Activated naive CD4-positive, alpha-beta T cell treated with anti-CD3 and anti-CD28 coated beads for 36 hours (primary cell): ENCODE measurements at regions of chr11 and their contacts with region 1.

Region 1: DNA sequence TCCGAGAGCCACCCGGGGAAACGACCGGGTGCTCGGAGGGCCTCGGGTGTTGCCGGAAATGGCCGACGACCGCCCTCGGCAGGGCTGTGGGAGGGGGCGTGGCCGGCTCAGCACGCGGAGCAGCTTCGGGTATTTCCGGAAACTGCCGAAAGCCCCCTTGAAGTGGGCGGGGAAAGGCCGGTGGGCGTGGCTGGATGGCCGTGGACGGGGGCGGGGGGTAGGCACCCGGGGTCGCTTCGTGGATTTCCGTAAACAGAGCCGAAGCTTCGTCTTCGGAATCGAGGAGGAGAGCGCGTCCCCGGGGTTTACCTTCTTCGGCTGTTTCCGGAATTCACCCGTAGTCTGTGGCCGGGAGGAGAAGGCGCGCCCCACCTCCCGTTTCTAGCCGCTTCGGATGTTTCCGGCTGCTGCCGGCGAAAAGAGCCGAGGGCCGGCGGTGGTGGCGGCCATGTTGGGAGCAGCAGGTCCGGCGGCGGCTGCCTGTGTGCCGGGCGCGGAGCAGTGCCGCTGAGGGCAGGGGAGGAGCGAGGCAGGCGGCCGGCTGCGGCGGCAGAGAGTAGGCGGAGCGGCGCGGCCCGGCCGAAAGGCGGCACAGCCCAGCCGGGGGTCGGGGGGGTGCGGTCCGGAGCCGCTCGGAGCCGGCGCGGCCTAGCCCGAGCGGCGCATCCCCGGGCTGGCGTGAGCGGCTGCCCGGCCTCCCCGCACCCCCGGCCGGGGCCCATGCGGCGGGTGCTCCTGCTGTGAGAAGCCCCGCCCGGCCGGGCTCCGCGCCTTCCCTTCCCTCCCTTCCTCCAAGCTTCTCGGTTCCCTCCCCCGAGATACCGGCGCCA is at the start of gene MARK2:
- DNase-seq: peak; percentile 100
- H3K4me3 Mint-ChIP-seq: peak within 1 kb of the TSS; percentile 97
- H3K27ac Mint-ChIP-seq: peak within 1 kb of the TSS; percentile 65
- H3K4me1 Mint-ChIP-seq: peaks cover 48% of the 10 kb centered on the region
- H3K27me3 Mint-ChIP-seq: no peaks in the 10 kb centered on the region
- total RNA-seq, gene MARK2: 15.8 to 17.6 TPM

Region 2: DNA sequence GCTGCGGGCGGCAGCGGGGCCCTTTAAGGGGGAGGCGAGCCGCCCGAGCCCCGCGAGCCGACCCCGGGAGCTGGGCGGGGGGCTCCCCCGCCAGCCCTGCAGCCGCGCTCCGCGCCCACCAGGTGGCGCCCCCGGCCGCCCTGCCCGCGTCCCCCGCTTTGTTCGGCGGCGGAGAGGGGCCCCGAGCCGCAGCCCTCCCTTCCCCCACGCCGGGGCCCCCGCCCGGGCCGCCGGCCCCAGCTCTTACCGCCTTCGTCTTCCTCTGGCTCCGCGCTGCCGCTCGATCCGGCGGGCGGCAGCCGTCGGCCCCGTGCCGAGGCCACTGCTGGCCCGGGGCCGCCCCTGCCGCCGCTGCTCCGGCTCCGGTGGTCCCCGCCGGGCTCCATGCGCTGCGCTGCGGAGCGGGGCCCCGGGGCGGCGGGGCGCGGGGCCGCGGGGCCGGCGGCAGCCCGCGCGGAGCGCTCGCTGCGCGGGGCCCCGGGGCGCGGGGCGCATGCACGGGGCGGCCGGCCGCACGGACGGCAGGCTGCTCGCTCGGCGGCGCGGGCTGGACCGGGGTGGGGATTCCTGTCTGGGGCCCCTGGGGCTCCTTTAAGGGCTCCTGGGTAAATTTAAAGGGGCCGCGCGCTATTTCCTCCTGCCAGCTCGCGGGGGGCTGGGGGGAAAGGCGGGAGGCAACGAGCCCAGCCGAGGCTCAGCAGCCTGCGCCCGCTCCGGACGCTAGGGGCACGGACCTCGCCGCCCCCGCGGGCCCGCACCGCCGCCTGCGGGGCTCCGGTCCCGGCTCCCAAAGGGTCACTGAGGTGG is 70.5 kb before region 1 on chr11 and contains the start of gene ZFTA:
- CTCF ChIA-PET with region 1: interaction called, 7 read pairs
- intact Hi-C with region 1: loop called (anchors 2 kb)
- DNase-seq: peak; percentile 49
- H3K4me3 Mint-ChIP-seq: peak within 1 kb of the TSS; percentile 88
- H3K27ac Mint-ChIP-seq: no peak within 1 kb of the TSS
- H3K4me1 Mint-ChIP-seq: peaks cover 11% of the 10 kb centered on the region
- H3K27me3 Mint-ChIP-seq: peaks cover 12% of the 10 kb centered on the region
- total RNA-seq, gene ZFTA: 0.91 TPM

Region 3: DNA sequence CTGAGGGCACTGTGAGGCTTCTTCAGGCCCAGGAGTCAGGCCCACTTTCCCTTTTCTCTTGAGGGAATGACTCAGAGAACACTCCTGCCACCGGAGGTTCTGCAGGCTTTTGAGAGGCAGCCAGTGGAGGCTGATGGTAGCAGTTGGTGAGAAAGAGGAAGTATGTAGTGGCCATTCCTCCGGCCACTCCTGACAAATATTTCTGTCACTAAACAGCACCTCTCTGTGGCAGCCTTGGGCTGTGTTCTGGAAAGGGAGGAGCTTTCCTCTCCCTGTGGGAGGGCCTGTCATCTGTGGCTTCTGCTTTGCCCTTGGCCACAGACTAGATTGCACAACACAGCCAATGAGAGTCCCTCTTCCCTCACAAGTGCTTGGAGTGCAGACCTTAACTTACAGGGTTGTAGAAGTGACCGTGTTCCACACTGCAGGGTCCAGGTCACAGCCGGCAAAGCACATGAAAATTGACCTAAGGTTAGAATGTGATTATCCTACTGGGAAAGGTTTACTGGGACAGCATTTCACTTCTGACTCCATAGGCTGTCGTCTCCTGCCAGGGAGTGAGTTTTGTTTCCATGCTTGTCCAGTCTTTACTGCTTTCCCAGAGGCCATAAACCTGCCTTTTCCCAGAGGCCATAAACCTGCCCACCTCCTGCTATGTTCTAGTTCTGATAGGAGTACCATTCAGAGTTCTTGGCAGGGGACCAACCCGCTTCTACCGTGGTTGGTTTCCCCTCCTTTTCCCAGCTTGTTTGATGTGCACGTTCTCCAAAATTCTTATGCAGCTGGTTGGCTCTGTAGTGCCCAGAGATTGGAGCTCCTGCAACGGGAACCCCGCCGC is 33.3 kb after region 1 on chr11:
- CTCF ChIA-PET with region 1: interaction called, 15 read pairs
- intact Hi-C with region 1: no loop called
- DNase-seq: peak; percentile 61
- H3K4me3 Mint-ChIP-seq: no peak overlapping the region
- H3K27ac Mint-ChIP-seq: no peak overlapping the region
- H3K4me1 Mint-ChIP-seq: peaks cover 78% of the 10 kb centered on the region
- H3K27me3 Mint-ChIP-seq: no peaks in the 10 kb centered on the region

Region 4: DNA sequence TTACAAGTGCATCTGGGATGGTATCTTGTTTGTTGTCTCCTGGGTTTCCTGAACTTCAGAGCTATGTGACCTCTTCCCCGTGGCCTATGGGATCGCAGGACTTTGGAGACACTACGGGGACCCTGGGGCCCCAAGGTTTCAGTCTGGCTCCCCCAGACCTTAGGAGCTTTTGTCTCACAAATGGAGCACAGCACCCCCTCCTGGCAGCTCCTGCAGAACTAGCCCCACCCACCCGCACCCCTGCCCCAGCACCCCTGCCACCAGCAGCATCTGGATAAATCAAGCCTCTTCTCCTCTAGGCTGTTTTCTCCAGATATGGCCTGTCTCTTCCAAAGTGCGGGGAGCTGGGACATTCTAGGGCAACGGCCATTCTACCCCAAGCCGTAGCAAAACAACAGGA is 67.7 kb after region 1 on chr11:
- CTCF ChIA-PET with region 1: interaction called, 41 read pairs
- intact Hi-C with region 1: loop called (anchors 1 kb)
- DNase-seq: peak; percentile 65
- H3K4me3 Mint-ChIP-seq: no peak overlapping the region
- H3K27ac Mint-ChIP-seq: no peak overlapping the region
- H3K4me1 Mint-ChIP-seq: no peaks in the 10 kb centered on the region
- H3K27me3 Mint-ChIP-seq: no peaks in the 10 kb centered on the region

Region 5: DNA sequence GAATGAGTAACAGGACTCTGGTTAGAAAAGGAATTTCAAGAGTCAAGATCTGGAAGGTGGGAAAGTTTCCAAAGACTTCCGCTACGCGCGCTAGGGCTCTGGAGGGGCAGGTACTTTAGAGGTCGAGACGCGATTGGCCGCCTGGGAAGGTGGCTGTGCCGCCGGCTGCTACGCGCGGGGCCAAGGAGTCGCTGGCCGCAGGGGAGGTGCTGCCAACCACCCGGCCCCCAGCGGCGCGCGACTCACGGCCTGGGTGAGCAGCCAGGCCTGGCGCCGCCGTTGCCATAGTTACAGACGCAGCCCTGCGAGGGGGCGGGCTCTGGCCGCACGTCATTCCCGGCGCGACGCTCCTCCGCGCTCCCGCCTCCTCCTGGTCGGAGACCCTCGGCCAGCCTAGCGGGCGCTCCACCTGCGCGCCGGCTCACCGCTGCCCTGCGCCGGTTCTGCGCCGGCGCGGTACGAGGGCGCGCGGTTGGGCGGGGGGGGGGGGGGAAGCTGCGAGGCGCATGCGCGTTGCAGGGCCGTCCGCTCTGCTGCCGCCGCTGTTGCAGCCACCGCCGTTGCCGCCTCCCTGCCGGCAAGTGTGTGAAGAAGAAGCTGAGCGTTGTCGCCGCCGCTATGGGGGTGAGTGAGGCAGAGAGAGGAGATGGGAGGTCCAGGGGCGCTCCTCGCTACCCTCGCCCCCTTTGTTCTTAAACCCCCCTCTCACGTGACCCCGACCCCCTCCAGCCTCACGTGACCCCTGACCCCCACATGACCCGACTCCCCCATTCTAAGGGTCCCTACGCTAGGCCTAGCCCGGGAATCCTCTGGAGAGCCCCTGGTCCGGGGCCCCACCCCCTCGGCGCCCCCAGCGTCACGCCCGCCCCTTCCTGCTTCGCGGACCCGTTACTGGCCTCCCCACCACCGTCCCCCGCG is 99.8 kb after region 1 on chr11 and contains the start of gene NAA40:
- CTCF ChIA-PET with region 1: interaction called, 18 read pairs
- intact Hi-C with region 1: loop called (anchors 1 kb)
- DNase-seq: peak; percentile 90
- H3K4me3 Mint-ChIP-seq: peak within 1 kb of the TSS; percentile 77
- H3K27ac Mint-ChIP-seq: peak within 1 kb of the TSS; percentile 52
- H3K4me1 Mint-ChIP-seq: peaks cover 13% of the 10 kb centered on the region
- H3K27me3 Mint-ChIP-seq: no peaks in the 10 kb centered on the region
- total RNA-seq, gene NAA40: 10.3 to 13.2 TPM

Region 6: DNA sequence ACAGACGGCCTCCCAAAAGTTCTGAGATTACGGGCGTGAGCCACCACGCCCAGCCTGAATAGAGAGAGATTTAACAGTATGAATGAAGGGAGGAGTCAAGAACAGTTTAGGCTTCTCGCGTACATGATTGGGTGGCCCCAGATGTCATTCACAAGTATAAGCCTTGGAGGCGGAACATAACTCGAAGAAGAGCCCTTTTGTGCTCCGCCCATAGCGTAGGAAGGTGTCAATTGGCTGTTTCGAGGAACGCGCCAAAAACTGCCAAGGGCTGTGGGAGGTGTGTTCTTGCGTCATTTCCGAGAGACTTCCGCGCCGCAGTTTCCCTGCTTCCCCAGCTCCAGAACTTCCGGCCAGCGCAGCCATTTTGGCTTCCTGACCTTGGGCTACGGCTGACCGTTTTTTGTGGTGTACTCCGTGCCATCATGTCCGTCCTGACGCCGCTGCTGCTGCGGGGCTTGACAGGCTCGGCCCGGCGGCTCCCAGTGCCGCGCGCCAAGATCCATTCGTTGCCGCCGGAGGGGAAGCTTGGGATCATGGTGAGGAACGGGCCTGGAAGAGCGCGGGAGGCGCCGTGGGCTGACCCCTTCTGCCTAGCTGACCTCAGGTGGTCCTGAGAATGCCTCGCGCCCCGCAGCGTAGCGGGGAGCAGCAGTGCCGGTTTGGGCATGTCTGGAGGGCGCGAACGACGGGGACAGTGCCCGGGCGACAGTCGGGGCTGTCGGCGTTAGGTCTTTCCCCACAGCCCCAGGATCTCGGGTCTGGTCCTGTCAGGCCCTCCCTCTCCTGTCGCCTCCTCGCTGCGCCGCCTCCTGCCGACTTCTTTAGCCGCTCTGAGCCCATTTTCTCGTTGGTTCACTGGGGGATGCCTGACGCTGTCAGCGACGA is 135.6 kb after region 1 on chr11 and contains the start of gene COX8A:
- CTCF ChIA-PET with region 1: interaction called, 9 read pairs
- intact Hi-C with region 1: loop called (anchors 1 kb)
- DNase-seq: peak; percentile 99
- H3K4me3 Mint-ChIP-seq: peak within 1 kb of the TSS; percentile 95
- H3K27ac Mint-ChIP-seq: peak within 1 kb of the TSS; percentile 98
- H3K4me1 Mint-ChIP-seq: peaks cover 27% of the 10 kb centered on the region
- H3K27me3 Mint-ChIP-seq: no peaks in the 10 kb centered on the region
- total RNA-seq, gene COX8A: 669 to 675 TPM

Region 7: DNA sequence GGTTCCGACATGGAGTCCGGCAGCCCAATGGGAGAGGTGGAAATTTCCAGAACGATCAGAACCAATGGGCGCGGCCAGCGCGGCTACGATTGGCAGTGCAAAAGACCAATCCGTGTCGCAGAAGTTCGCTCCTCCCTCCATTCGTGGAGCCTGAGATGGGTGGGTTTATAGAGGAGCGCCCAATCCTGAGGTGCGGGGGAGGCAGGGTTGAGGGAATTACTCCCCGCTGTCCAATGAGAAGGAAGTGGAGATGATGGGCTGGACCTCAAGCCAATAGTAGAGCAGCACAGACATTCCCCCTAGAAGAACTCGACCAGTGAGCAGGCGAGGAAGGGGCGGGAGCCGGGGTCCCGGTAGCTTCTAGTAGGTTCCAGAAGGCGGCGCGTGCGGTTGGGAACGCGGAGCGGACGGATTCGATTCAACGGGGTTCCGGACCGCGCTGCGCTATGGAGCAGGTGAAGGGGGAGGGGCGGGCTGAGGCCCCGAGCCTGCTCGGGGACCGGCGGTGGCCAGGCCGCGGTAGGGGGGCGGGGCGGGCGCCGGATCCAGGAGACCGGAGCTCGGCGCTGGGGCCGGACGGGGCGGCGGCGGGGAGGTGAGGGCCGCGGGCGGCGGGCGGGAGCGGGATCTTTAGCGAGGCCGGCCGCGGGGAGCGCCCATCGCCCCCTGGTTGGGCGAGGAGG is 347.1 kb after region 1 on chr11 and contains the start of gene STIP1:
- CTCF ChIA-PET with region 1: no interaction called
- intact Hi-C with region 1: loop called (anchors 2 kb)
- DNase-seq: peak; percentile 99
- H3K4me3 Mint-ChIP-seq: no peak within 1 kb of the TSS
- H3K27ac Mint-ChIP-seq: peak within 1 kb of the TSS; percentile 94
- H3K4me1 Mint-ChIP-seq: peaks cover 54% of the 10 kb centered on the region
- H3K27me3 Mint-ChIP-seq: no peaks in the 10 kb centered on the region
- total RNA-seq, gene STIP1: 264 to 272 TPM